ENCODE measurements at regions of chr18 and their contacts with region 1.

Region 1: GRCh38 chr18:74353169-74353775 is 37.6 kb downstream of the C18orf63 start:
- DNase-seq: no peak
- ATAC-seq: peak; percentile 92

Region 2: GRCh38 chr18:74139888-74140287 is 213.4 kb before region 1 on chr18:
- intact Hi-C with region 1: no loop called
- DNase-seq: no peak
- ATAC-seq: no peak

Region 3: GRCh38 chr18:74242438-74243096 is 110.7 kb before region 1 on chr18:
- intact Hi-C with region 1: no loop called
- DNase-seq: peak; percentile 68
- ATAC-seq: peak; percentile 91

Region 4: DNA sequence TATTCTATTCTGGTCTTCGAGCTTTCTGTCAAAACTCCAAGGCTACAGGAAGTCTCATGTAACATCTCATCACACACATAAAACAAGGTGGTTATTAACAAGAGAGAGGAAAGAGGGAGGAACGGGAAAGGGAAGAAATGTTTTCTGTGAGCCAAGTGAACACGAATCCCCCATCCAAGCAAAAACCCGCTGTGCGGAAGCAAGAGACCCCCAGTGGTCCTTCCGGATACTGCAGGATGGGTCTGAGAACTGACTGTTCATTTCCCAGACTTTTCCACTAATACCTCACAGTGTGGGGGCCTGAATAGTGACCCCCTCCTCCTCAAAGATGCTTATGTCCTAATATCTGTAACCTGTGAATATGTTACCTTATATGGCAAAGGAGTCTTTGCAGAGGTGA is 122.9 kb after region 1 on chr18:
- intact Hi-C with region 1: loop called (anchors 2 kb)
- DNase-seq: no peak
- ATAC-seq: peak; percentile 58

Region 5: DNA sequence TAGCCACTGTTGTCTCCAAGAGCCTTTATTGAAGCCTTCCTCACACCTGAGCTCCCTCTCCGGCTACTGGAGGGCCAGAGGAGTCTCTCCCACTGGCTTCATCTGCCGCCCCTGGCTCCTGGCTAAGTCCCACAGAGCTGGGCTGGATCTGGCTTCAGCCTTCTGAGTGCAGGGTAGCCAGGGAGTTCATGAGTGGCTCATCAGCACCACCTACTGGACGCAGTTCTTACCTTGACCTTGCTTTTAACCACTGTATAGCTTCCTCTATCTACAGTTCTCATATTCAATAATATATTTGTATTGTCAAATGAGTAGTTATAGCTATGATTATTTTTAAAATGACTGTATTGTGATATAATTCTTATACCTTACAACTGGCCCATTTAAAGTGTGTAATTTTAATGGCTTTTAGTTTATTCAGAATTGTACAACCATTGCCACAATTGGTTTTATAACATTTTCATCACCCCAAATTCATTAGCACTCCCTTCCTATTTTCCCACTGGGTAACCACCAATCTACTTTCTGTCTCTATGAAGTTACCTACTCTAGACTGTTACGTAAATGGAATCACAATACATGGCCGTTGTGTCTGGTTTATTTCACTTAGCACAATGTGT is 198.8 kb after region 1 on chr18:
- intact Hi-C with region 1: loop called (anchors 1 kb)
- DNase-seq: peak; percentile 72
- ATAC-seq: peak; percentile 97